ENCODE measurements at regions of chr12 and their contacts with region 1.

Region 1: DNA sequence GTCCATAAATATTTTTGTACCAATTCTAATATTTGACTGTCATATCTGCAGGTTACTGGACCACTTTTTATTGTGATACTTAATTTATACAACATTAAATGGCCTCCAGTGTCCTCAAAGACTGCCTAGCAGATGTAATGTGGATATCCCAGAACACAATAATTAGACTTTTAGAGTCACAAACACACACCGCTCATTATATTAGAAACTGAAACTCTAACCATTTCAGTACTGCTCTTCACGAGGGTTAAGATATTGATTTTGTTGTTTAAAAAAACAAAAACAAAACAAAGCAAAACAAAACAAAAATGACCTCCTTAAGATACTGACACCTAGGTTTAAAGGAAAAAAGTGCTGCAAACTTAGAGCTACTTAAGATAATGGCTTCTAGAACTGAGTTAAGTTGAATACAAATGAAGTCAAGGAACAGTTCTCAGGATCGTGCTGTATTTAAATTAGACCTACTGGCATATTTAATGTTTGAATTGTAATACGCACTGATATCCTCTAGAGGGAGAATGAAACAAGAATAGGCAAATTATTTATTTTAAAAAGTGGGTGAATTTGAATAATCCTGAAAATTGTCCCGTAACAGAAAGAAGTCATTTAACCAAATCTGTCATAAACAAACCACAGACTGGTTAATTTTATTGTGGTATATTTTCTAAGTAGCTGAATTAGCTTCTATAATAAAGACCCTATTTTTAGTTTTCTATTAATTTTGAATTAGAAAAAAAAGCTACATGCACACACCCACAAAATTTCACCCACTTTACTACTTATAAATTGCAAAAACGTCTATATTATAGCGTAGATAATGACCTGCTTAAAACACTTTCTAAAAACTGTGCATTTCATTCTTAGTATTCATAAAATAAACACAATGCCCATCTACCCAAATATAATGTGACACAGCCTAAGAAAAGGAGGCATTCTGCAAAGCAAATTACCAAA is 395.2 kb upstream of the DCN start:
- DNase-seq: peak in 4 of 5 donors; percentile 33 to 44 (median 42)
- H3K4me3 ChIP-seq: peak overlapping the region; percentile 18 to 50
- H3K4me3 Mint-ChIP-seq: peak overlapping the region; percentile 77 to 91 (median 84)
- H3K27ac ChIP-seq: no peak overlapping the region
- H3K27ac Mint-ChIP-seq: peak overlapping the region in 5 of 7 donors; percentile 33 to 91 (median 77)
- H3K4me1 ChIP-seq: peaks cover 4% of the 10 kb centered on the region
- H3K4me1 Mint-ChIP-seq: peaks cover 4 to 9% (median 5%) of the 10 kb centered on the region in 4 donors
- H3K27me3 ChIP-seq: no peaks in the 10 kb centered on the region
- H3K27me3 Mint-ChIP-seq: peaks cover 1 to 3% of the 10 kb centered on the region in 2 donors

Region 2: GRCh38 chr12:91542089-91542488 is 35.8 kb before region 1 on chr12:
- CTCF ChIA-PET with region 1: no interaction called
- POLR2A ChIA-PET with region 1: no interaction called
- intact Hi-C with region 1: no loop called
- DNase-seq: no peak
- H3K4me3 ChIP-seq: no peak overlapping the region
- H3K4me3 Mint-ChIP-seq: no peak overlapping the region
- H3K27ac ChIP-seq: no peak overlapping the region
- H3K27ac Mint-ChIP-seq: no peak overlapping the region
- H3K4me1 ChIP-seq: no peaks in the 10 kb centered on the region
- H3K4me1 Mint-ChIP-seq: no peaks in the 10 kb centered on the region
- H3K27me3 ChIP-seq: no peaks in the 10 kb centered on the region
- H3K27me3 Mint-ChIP-seq: peaks cover 2 to 4% of the 10 kb centered on the region in 2 donors

Region 3: GRCh38 chr12:91561958-91562875 is 15.6 kb before region 1 on chr12:
- CTCF ChIA-PET with region 1: interaction called, 23 read pairs
- POLR2A ChIA-PET with region 1: no interaction called
- intact Hi-C with region 1: no loop called
- DNase-seq: peak in 4 of 5 donors; percentile 11 to 25 (median 14)
- H3K4me3 ChIP-seq: no peak overlapping the region
- H3K4me3 Mint-ChIP-seq: peak overlapping the region; percentile 25 to 77 (median 64)
- H3K27ac ChIP-seq: no peak overlapping the region
- H3K27ac Mint-ChIP-seq: peak overlapping the region in 6 of 7 donors; percentile 15 to 78 (median 44)
- H3K4me1 ChIP-seq: peaks cover 16% of the 10 kb centered on the region
- H3K4me1 Mint-ChIP-seq: peaks cover 18 to 27% (median 19%) of the 10 kb centered on the region in 4 donors
- H3K27me3 ChIP-seq: no peaks in the 10 kb centered on the region
- H3K27me3 Mint-ChIP-seq: no peaks in the 10 kb centered on the region

Region 4: DNA sequence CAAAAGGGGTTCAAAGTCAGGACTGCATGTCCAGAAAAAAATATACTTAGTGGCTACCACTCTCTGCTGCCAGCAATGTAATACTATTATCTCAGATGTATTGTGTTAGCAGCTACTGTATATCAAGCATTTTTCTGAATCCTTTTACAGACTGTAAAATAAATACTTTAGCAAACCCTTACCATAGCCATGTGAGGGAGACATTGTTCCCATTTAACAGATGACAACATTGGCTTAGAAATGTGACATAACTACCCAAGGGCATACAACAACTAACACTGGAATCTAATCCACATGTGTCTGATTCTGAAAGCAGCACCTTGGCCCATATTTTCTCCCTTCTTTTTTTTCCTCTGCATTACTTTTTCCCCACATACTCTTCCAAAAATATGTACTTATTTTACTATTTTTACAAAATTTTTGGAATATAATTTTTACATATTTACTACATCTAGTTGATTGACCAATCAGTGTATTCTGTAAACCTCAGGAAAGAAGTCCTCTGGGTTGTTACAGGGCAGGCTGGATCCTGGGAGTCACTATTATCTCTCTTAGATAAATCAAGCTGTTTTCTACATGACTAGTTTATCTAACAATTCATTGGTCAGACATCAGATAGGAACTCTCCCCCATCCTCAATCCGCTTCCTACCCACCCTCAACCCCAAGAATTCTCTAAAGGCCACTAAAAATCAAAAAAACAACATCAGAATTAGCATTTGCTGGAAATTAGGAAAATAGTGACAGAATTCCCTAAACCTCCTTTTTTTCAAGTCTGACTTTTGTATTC is 413.7 kb after region 1 on chr12:
- CTCF ChIA-PET with region 1: interaction called, 4 read pairs
- POLR2A ChIA-PET with region 1: no interaction called
- intact Hi-C with region 1: loop called (anchors 1 kb)
- DNase-seq: peak in 4 of 5 donors; percentile 51 to 67 (median 54)
- H3K4me3 ChIP-seq: no peak overlapping the region
- H3K4me3 Mint-ChIP-seq: no peak overlapping the region
- H3K27ac ChIP-seq: no peak overlapping the region
- H3K27ac Mint-ChIP-seq: peak overlapping the region in 5 of 7 donors; percentile 22 to 85 (median 70)
- H3K4me1 ChIP-seq: peaks cover 27% of the 10 kb centered on the region
- H3K4me1 Mint-ChIP-seq: peaks cover 18 to 37% (median 28%) of the 10 kb centered on the region in 4 donors
- H3K27me3 ChIP-seq: no peaks in the 10 kb centered on the region
- H3K27me3 Mint-ChIP-seq: no peaks in the 10 kb centered on the region

Measured in CD4-positive, alpha-beta memory T cell (primary cell).